ENCODE measurements at regions of chr4 and their contacts with region 1.

Region 1: DNA sequence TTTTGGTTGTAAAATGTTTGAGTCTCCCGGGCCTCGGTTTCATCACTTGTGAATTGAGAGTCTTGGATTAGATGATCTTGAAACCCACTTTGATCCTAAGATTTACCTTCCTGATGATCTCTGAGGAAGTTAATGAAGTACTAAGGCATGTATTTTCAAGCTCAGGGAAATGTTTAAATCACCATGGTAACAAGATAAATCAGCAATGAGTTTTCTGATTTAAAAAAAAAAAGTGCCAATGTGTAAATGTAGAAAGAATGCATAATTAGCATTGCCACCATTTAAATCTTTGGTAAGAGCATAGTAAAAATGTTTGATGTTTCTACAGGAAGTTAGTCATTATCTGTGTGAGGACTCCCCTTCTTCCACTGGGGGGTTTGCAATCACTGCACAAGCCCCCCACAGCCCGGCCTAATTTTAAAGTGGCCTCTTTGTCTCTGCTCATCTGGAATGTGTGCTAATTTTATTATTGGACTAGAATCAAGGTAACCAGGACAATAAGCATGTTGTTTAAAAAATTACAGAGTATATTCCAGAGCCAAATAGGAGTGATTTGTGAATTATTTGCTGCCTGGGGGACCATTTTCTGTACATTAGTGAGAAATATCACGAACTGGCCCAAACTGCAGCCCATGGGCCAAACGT is 93.6 kb downstream of the SLC34A2 start:
- DNase-seq: no peak
- ATAC-seq: no peak
- H3K4me3 ChIP-seq: no peak overlapping the region
- H3K4me3 Mint-ChIP-seq: no peak overlapping the region
- H3K27ac ChIP-seq: no peak overlapping the region
- H3K27ac Mint-ChIP-seq: no peak overlapping the region
- H3K4me1 ChIP-seq: no peaks in the 10 kb centered on the region
- H3K4me1 Mint-ChIP-seq: no peaks in the 10 kb centered on the region
- H3K27me3 ChIP-seq: no peaks in the 10 kb centered on the region
- H3K27me3 Mint-ChIP-seq: no peaks in the 10 kb centered on the region
- CTCF ChIP-seq: no peak

Region 2: DNA sequence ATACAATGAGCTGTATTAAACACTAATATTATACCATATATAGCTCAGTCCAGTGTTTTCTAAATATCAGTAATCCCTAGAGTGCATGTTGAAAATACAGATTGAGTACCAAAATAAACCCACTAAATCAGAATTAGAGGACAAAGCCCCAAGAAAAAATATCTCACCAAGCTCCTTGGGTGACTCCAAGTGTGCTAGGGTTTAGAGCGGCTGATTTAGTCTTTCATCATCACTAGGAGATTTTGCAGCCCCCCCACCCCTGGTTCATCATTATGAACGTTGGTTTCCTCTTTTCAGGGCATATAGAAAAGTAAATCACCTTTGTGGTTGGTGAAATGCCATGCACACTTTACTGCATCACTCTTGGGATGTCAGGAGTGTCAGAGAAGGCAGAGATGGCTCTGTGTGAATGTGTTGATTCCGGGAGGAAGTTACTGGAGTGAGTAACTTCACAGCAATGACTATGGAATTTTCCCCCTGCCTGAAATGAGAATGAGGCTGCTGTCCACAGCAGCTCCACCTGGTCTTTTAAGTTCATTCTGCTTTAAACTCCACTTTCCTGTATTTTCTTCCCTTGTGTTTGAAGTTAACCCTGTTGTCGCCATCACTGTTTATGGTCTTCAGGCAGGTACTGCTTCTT is 397.4 kb before region 1 on chr4:
- CTCF ChIA-PET with region 1: no interaction called
- POLR2A ChIA-PET with region 1: no interaction called
- intact Hi-C with region 1: loop called in 1 of 2 experiments (anchors 5 kb)
- DNase-seq: no peak
- ATAC-seq: no peak
- H3K4me3 ChIP-seq: no peak overlapping the region
- H3K4me3 Mint-ChIP-seq: no peak overlapping the region
- H3K27ac ChIP-seq: no peak overlapping the region
- H3K27ac Mint-ChIP-seq: no peak overlapping the region
- H3K4me1 ChIP-seq: no peaks in the 10 kb centered on the region
- H3K4me1 Mint-ChIP-seq: no peaks in the 10 kb centered on the region
- H3K27me3 ChIP-seq: no peaks in the 10 kb centered on the region
- H3K27me3 Mint-ChIP-seq: no peaks in the 10 kb centered on the region
- CTCF ChIP-seq: no peak